ENCODE measurements at regions of chr7 and their contacts with region 1.

Region 1: DNA sequence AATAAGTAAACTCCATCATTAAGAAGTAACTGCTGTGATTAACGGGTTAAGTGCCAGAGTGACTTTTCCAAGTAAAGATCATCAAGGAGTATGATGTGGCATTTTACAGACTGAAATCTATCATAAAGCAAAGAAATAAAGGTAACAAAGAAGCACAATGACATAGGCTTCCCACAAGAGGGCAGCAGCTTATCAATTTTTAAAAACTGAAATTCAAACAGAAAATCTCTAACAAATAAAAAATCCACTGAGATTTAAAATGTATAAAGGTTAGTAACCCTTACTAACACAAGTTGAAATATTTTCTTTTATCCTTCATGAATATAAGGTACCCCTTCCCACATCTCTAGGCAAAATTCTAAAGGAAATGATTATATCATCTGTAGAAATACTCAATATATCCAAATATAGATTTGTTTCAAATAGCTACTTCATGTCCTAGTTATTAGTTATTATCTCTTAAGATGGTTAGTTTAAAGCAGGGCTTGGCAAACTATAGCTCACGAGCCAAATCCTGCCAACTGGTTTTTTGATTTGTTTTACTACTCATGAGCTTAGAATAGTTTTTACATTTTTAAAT is 29.2 kb downstream of the FAM3C start:
- DNase-seq: no peak
- ATAC-seq: peak; percentile 65
- H3K4me3 ChIP-seq: no peak overlapping the region
- H3K4me1 ChIP-seq: peaks cover 9% of the 10 kb centered on the region
- CTCF ChIP-seq: peak; percentile 54

Region 2: GRCh38 chr7:121138262-121138933 is 228.5 kb before region 1 on chr7:
- intact Hi-C with region 1: no loop called
- DNase-seq: peak in 1 of 3 donors; percentile 5
- ATAC-seq: peak; percentile 50
- H3K4me3 ChIP-seq: no peak overlapping the region
- H3K4me1 ChIP-seq: no peaks in the 10 kb centered on the region
- CTCF ChIP-seq: no peak

Region 3: GRCh38 chr7:121480058-121480457 is 113.1 kb after region 1 on chr7:
- intact Hi-C with region 1: no loop called
- DNase-seq: no peak
- ATAC-seq: no peak
- H3K4me3 ChIP-seq: no peak overlapping the region
- H3K4me1 ChIP-seq: no peaks in the 10 kb centered on the region
- CTCF ChIP-seq: no peak

Region 4: GRCh38 chr7:121547544-121548092 is 180.7 kb after region 1 on chr7:
- intact Hi-C with region 1: loop called (anchors 5 kb)
- DNase-seq: peak in 1 of 3 donors; percentile 10
- ATAC-seq: peak; percentile 88
- H3K4me3 ChIP-seq: no peak overlapping the region
- H3K4me1 ChIP-seq: no peaks in the 10 kb centered on the region
- CTCF ChIP-seq: peak; percentile 47

Measured in mucosa of descending colon (tissue), 3 donors.